Astrocyte of the cerebellum (primary cell): ENCODE measurements at regions of chr18 and their contacts with region 1.

Region 1: GRCh38 chr18:3256693-3257626 is 5.0 kb upstream of the MYL12B start:
- DNase-seq: no peak
- H3K4me3 ChIP-seq: no peak overlapping the region
- CTCF ChIP-seq: no peak

Region 2: DNA sequence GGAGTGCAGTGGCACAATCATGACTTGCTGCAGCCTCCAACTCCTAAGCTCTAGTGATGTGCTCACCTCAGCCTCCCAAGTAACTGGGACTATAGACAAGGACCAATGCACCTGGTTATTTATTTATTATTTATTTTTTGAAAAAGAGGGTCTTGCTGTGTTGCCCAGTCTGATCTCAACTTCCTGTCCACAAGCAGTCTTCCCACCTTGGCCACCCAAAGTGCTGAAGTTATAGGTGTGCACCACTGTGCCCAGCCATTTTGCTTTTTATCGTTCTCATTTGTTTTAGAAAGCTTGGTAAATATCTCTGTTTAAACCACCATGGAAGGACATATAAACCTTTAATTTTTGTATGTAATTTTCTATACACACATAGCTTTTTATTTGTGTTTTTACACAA is 527.2 kb before region 1 on chr18:
- in situ Hi-C with region 1: loop called (anchors 10 kb)
- DNase-seq: no peak
- H3K4me3 ChIP-seq: no peak overlapping the region
- CTCF ChIP-seq: no peak

Region 3: DNA sequence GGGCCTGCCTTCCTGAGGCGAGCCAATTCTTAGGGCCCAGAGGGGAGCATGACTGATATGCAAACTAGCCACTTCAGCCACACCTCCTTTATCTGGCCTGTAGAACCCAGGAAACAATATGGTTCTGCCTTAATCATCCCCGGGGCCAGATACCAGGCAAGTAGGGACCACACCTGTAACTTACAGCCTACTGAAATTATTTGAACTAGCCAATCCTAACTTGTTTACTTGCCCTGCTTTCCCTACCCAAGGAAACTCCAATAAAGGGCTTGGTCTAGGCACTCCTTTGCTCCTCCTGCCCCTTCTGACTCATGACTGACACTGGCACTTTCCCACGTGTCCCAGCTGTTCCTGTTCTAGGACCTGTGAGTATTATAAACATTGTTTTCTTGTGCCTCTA is 94.8 kb before region 1 on chr18:
- in situ Hi-C with region 1: no loop called
- DNase-seq: no peak
- H3K4me3 ChIP-seq: no peak overlapping the region
- CTCF ChIP-seq: no peak

Region 4: GRCh38 chr18:3199942-3200645 is 56.9 kb before region 1 on chr18:
- in situ Hi-C with region 1: no loop called
- DNase-seq: no peak
- H3K4me3 ChIP-seq: no peak overlapping the region
- CTCF ChIP-seq: no peak

Region 5: DNA sequence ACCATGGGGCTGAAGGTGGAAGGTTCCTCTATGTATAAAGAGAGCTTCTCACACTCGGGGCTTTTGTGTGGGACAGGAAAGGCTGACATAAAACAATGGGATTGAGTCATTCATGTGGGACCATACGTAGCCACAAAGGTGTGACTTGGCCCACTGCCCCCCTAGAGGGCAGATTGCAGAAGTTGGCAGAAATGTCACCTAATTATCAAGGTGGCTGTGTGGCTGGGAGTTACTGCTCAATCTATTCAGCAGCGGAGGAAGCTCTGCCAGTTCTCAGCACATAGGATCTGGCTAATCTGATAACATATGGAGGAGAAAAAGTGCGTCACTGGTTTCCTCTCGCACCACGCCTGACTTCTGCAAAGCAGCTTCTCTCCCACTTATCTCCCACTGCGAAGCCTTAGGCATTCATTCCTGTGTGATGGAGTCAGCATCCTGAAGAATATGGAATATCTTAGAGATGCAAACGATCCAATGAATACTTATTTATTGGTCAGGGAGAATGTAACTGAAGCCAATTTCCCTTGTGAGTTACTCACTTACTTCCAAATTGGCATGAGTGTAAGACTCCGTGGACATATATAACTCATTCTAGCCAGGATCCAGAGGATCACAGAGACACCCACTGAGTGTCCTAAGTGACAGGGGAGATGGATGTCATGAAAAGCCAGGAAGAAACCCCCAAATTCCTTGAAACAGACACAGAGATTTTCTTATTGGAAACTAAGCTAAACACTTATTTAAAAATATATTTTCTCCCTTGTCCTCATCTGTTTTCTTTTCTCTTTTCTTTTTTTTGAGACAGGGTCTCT is 537.8 kb after region 1 on chr18:
- in situ Hi-C with region 1: no loop called
- DNase-seq: peak; percentile 96
- H3K4me3 ChIP-seq: no peak overlapping the region
- CTCF ChIP-seq: no peak